ENCODE measurements at regions of chr12 and their contacts with region 1.

Region 1: GRCh38 chr12:6335451-6336078 is 6.3 kb downstream of the TNFRSF1A start:
- DNase-seq: peak; percentile 94
- H3K4me3 Mint-ChIP-seq: no peak overlapping the region
- H3K27ac Mint-ChIP-seq: no peak overlapping the region
- H3K4me1 Mint-ChIP-seq: peaks cover 46% of the 10 kb centered on the region
- H3K27me3 Mint-ChIP-seq: no peaks in the 10 kb centered on the region

Region 2: DNA sequence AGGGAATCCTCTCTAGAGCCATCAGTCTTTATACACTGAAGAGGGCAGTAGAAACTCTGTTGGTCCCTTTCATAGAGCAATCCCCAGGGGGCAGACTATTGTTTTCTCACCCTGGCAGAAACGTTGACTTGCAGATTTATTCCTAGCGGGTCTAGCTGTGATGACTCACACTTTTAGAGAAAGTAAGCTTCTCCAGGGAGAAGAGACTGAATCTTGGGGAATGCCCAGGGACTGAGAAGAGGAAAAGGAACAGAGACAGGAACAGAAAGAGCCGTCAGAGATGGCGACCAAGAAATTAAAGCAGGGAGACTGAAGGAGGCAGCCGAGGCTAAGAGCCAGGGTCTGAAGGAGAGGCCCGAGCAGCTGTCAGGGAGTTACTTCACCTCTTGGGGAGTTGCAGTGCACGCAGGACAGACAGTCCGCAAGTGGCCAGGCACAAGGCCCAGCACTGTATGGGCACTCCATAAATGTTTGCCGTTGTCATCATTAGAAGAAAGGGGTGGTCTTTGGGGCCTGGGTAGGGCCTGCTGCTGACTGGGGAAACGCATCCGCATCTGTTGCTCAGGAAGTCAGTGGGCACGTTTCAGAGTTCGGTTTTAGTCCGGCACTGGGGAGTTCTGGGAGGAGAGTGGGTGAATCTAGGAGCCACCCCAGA is 12.1 kb before region 1 on chr12:
- CTCF ChIA-PET with region 1: interaction called, 39 read pairs
- intact Hi-C with region 1: loop called (anchors 1 kb)
- DNase-seq: peak; percentile 55
- H3K4me3 Mint-ChIP-seq: peak overlapping the region; percentile 40
- H3K27ac Mint-ChIP-seq: peak overlapping the region; percentile 83
- H3K4me1 Mint-ChIP-seq: peaks cover 39% of the 10 kb centered on the region
- H3K27me3 Mint-ChIP-seq: no peaks in the 10 kb centered on the region

Region 3: GRCh38 chr12:6355491-6356371 is 20.2 kb after region 1 on chr12:
- CTCF ChIA-PET with region 1: interaction called, 13 read pairs
- intact Hi-C with region 1: no loop called
- DNase-seq: no peak
- H3K4me3 Mint-ChIP-seq: no peak overlapping the region
- H3K27ac Mint-ChIP-seq: no peak overlapping the region
- H3K4me1 Mint-ChIP-seq: peaks cover 5% of the 10 kb centered on the region
- H3K27me3 Mint-ChIP-seq: no peaks in the 10 kb centered on the region

Region 4: GRCh38 chr12:6367065-6367968 is 31.8 kb after region 1 on chr12:
- CTCF ChIA-PET with region 1: interaction called, 22 read pairs
- intact Hi-C with region 1: loop called (anchors 1 kb)
- DNase-seq: peak; percentile 62
- H3K4me3 Mint-ChIP-seq: no peak overlapping the region
- H3K27ac Mint-ChIP-seq: no peak overlapping the region
- H3K4me1 Mint-ChIP-seq: peaks cover 29% of the 10 kb centered on the region
- H3K27me3 Mint-ChIP-seq: no peaks in the 10 kb centered on the region

Region 5: GRCh38 chr12:6430124-6430989 is 94.8 kb after region 1 on chr12:
- CTCF ChIA-PET with region 1: interaction called, 3 read pairs
- intact Hi-C with region 1: loop called (anchors 1 kb)
- DNase-seq: peak; percentile 78
- H3K4me3 Mint-ChIP-seq: peak overlapping the region; percentile 46
- H3K27ac Mint-ChIP-seq: peak overlapping the region; percentile 84
- H3K4me1 Mint-ChIP-seq: peaks cover 85% of the 10 kb centered on the region
- H3K27me3 Mint-ChIP-seq: no peaks in the 10 kb centered on the region

Region 6: GRCh38 chr12:6461401-6462233 is 126.1 kb after region 1 on chr12:
- CTCF ChIA-PET with region 1: interaction called, 10 read pairs
- intact Hi-C with region 1: loop called (anchors 1 kb)
- DNase-seq: peak; percentile 93
- H3K4me3 Mint-ChIP-seq: peak overlapping the region; percentile 80
- H3K27ac Mint-ChIP-seq: peak overlapping the region; percentile 97
- H3K4me1 Mint-ChIP-seq: peaks cover 89% of the 10 kb centered on the region
- H3K27me3 Mint-ChIP-seq: no peaks in the 10 kb centered on the region

Region 7: GRCh38 chr12:6554168-6555017 is 218.8 kb after region 1 on chr12:
- CTCF ChIA-PET with region 1: interaction called, 4 read pairs
- intact Hi-C with region 1: loop called (anchors 5 kb)
- DNase-seq: peak; percentile 86
- H3K4me3 Mint-ChIP-seq: peak overlapping the region; percentile 78
- H3K27ac Mint-ChIP-seq: peak overlapping the region; percentile 1
- H3K4me1 Mint-ChIP-seq: peaks cover 52% of the 10 kb centered on the region
- H3K27me3 Mint-ChIP-seq: no peaks in the 10 kb centered on the region

Measured in activated naive CD4-positive, alpha-beta T cell treated with anti-CD3 and anti-CD28 coated beads for 36 hours (primary cell).